Activated CD8-positive, alpha-beta memory T cell treated with anti-CD3 and anti-CD28 coated beads, Interleukin-2, amount 10 ng/mL, durations not matched to agents 7 days and 5 days (primary cell): ENCODE measurements at regions of chr1 and their contacts with region 1.

Region 1: GRCh38 chr1:27568300-27569087 is 35.5 kb downstream of the AHDC1 start:
- DNase-seq: peak; percentile 94
- ATAC-seq: peak; percentile 98
- H3K4me3 Mint-ChIP-seq: peak overlapping the region; percentile 59
- H3K27ac Mint-ChIP-seq: peak overlapping the region; percentile 45
- H3K4me1 Mint-ChIP-seq: peaks cover 15% of the 10 kb centered on the region
- H3K27me3 Mint-ChIP-seq: no peaks in the 10 kb centered on the region

Region 2: DNA sequence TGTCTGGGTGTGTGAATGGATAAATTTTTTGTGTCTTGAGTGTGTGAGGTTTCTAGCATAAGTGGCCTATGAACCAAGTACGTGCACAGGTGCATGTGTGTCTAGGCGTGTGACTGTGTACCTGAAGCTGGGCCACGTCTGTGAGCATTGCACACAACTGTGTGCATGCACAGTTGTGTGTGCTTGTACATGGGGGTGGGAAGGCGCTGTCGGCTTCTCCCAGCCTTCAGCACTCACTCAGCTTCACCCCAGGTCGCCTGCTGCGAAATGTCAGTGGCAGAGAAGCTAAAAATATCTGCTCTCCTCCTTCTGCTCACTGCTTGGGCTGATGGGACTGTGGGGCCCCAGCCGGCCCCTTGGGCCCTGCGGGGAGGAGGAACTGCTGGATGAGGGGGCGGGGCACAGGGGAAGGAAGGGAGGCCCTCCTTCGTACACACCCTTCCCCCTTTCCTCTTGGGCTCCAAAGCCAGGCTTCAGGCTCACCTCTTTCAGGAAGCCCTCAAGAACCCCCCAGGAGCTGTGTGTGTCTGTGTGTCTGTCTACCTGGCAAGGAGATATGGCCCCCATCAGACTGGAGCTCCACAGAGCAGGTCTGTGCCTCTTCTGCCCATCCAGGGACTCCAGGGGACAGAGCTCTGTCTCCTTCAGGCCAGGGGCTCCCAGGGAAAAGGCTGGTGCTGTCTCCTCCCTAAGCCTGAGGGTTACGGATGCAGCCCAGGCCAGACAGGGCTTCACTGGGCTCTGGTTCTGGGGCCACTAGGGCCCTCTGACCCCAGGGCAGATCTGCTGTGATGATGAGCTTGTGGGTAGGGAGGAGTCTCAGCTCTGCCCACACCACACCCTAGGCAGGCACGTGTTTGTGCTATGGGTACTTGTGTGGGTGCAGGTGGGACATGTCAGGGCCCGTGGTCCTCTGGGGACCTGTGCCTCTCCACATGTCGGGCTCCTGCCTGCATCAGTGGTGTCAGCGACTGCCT is 42.9 kb before region 1 on chr1:
- CTCF ChIA-PET with region 1: interaction called, 10 read pairs
- DNase-seq: peak; percentile 79
- ATAC-seq: peak; percentile 63
- H3K4me3 Mint-ChIP-seq: peak overlapping the region; percentile 25
- H3K27ac Mint-ChIP-seq: peak overlapping the region; percentile 43
- H3K4me1 Mint-ChIP-seq: peaks cover 59% of the 10 kb centered on the region
- H3K27me3 Mint-ChIP-seq: peaks cover 7% of the 10 kb centered on the region

Region 3: GRCh38 chr1:27581823-27582243 is 13.3 kb after region 1 on chr1:
- CTCF ChIA-PET with region 1: interaction called, 22 read pairs
- DNase-seq: no peak
- ATAC-seq: no peak
- H3K4me3 Mint-ChIP-seq: no peak overlapping the region
- H3K27ac Mint-ChIP-seq: no peak overlapping the region
- H3K4me1 Mint-ChIP-seq: peaks cover 9% of the 10 kb centered on the region
- H3K27me3 Mint-ChIP-seq: peaks cover 2% of the 10 kb centered on the region

Region 4: DNA sequence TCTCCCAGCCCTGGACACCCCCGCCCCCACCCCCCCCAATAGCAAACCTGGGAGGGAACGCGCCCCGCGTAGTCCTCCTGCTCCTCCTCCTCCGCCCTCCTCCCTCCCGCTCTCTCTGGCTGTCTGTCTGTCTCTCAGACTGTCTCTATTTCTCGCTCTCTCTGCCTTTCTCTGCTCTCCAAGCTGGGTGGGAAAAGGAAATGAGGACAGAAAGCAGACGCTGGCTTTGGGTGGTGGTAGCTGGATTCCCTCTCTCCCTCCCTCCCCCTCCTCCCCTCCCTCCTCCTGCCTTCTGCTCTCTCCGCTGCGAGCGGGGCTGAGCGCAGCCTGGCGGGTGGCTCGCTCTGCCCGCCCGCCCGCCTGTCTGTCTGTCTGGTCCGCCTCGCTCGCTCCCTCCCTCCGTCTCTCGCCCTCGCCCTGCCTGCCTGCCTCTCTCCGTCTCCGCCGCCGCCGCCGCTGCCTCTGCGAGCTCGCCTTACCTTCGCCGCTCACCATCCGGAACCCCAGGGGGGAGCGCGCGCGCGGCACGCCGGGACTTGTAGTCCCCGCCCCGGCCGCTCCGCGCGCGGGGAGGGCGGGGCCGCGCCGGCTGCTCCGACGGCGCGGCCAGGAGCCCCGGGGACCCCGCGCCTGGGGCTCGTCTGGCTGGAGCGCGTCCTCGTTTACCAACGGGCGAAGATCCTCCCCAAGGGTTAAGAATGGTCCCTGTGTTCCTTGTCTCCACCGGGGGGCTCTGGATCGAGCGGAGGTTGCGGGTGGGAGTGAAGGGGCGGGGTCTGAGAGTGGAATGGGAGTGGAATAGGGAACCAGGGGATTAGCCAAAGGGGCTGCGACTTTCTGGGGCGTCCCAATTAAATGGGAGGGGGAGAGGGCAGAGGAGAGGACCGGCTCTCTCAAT is 35.4 kb after region 1 on chr1 and contains the start of gene AHDC1:
- CTCF ChIA-PET with region 1: interaction called, 19 read pairs
- DNase-seq: peak; percentile 93
- ATAC-seq: peak; percentile 90
- H3K4me3 Mint-ChIP-seq: peak within 1 kb of the TSS; percentile 94
- H3K27ac Mint-ChIP-seq: peak within 1 kb of the TSS; percentile 70
- H3K4me1 Mint-ChIP-seq: peaks cover 37% of the 10 kb centered on the region
- H3K27me3 Mint-ChIP-seq: no peaks in the 10 kb centered on the region
- total RNA-seq, gene AHDC1: 15.8 to 18.5 TPM

Region 5: DNA sequence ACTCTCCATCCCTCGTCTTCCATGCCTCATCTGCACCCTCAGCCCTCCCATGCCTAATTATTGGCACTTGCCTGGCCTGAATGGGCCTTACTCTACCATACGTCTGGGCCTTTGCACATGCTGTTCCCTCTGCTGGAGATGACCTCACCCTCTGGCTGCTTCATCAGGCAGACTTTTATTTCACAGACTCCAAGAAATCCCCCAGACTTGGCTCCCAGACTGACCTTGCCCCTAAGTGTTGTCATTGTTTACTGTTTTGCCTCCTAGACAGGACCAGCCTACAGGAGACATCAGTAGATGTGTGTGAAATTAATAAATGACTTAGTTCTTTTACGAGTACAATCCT is 40.7 kb after region 1 on chr1:
- CTCF ChIA-PET with region 1: interaction called, 16 read pairs
- DNase-seq: no peak
- ATAC-seq: peak; percentile 28
- H3K4me3 Mint-ChIP-seq: no peak overlapping the region
- H3K27ac Mint-ChIP-seq: no peak overlapping the region
- H3K4me1 Mint-ChIP-seq: peaks cover 21% of the 10 kb centered on the region
- H3K27me3 Mint-ChIP-seq: no peaks in the 10 kb centered on the region